ENCODE measurements at regions of chr1 and their contacts with region 1.

Region 1: GRCh38 chr1:199982606-199983005 is 44.9 kb upstream of the NR5A2 start:
- DNase-seq: no peak
- ATAC-seq: peak in 1 of 4 donors; percentile 10
- H3K4me3 ChIP-seq: no peak overlapping the region
- H3K27ac ChIP-seq: no peak overlapping the region
- H3K4me1 ChIP-seq: peaks cover 0 to 22% (median 17%) of the 10 kb centered on the region in 3 donors
- H3K27me3 ChIP-seq: no peaks in the 10 kb centered on the region
- CTCF ChIP-seq: no peak

Region 2: GRCh38 chr1:199719156-199719837 is 263.3 kb before region 1 on chr1:
- intact Hi-C with region 1: loop called in 1 of 3 experiments (anchors 10 kb)
- DNase-seq: no peak
- ATAC-seq: no peak
- H3K4me3 ChIP-seq: no peak overlapping the region
- H3K27ac ChIP-seq: no peak overlapping the region
- H3K4me1 ChIP-seq: no peaks in the 10 kb centered on the region
- H3K27me3 ChIP-seq: no peaks in the 10 kb centered on the region
- CTCF ChIP-seq: no peak

Region 3: DNA sequence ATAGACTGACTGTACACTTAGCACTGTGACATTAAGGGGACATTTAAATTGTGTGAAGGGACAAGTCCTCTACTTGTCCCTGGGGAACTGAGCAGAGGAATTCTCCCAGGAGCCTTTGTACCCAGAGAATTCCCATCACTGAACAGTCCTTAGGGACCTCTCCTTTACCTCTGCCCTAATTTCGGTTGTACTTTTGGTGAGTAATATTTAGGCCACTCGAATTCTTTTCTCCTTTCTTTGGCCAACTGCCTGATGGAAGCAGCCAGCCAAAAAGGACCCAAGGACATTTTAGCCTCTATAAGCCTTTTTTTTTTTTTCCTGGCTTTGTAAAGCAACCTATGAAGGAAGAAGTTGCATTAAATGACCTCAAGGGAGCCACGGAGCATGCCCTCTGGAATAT is 116.4 kb after region 1 on chr1:
- intact Hi-C with region 1: no loop called
- DNase-seq: peak in 1 of 6 donors; percentile 48
- ATAC-seq: peak; percentile 6 to 38 (median 14)
- H3K4me3 ChIP-seq: no peak overlapping the region
- H3K27ac ChIP-seq: peak overlapping the region in 1 of 4 donors; percentile 2
- H3K4me1 ChIP-seq: peaks cover 34 to 50% (median 46%) of the 10 kb centered on the region in 3 donors
- H3K27me3 ChIP-seq: no peaks in the 10 kb centered on the region
- CTCF ChIP-seq: no peak

Measured in pancreas (tissue), 10 donors.